ENCODE measurements at regions of chr11 and their contacts with region 1.

Region 1: GRCh38 chr11:100810666-100811065 is 123.6 kb downstream of the ARHGAP42 start:
- DNase-seq: no peak
- H3K4me3 Mint-ChIP-seq: no peak overlapping the region
- H3K27ac Mint-ChIP-seq: no peak overlapping the region
- H3K4me1 Mint-ChIP-seq: no peaks in the 10 kb centered on the region
- H3K27me3 Mint-ChIP-seq: no peaks in the 10 kb centered on the region

Region 2: GRCh38 chr11:100676901-100677300 is 133.8 kb before region 1 on chr11:
- CTCF ChIA-PET with region 1: no interaction called
- intact Hi-C with region 1: no loop called
- DNase-seq: no peak
- H3K4me3 Mint-ChIP-seq: no peak overlapping the region
- H3K27ac Mint-ChIP-seq: no peak overlapping the region
- H3K4me1 Mint-ChIP-seq: peaks cover 2% of the 10 kb centered on the region
- H3K27me3 Mint-ChIP-seq: no peaks in the 10 kb centered on the region

Region 3: GRCh38 chr11:100849901-100850235 is 39.2 kb after region 1 on chr11:
- CTCF ChIA-PET with region 1: no interaction called
- intact Hi-C with region 1: loop called (anchors 1 kb)
- DNase-seq: no peak
- H3K4me3 Mint-ChIP-seq: no peak overlapping the region
- H3K27ac Mint-ChIP-seq: no peak overlapping the region
- H3K4me1 Mint-ChIP-seq: no peaks in the 10 kb centered on the region
- H3K27me3 Mint-ChIP-seq: no peaks in the 10 kb centered on the region

Measured in activated naive CD4-positive, alpha-beta T cell treated with anti-CD3 and anti-CD28 coated beads for 36 hours (primary cell).